Activated naive CD4-positive, alpha-beta T cell treated with anti-CD3 and anti-CD28 coated beads, Interleukin-2, amount 10 ng/mL, durations not matched to agents 7 days and 5 days (primary cell): ENCODE measurements at regions of chr16 and their contacts with region 1.

Region 1: GRCh38 chr16:81696961-81697615 is 82.0 kb upstream of the PLCG2 start:
- DNase-seq: peak; percentile 69
- H3K4me3 Mint-ChIP-seq: no peak overlapping the region
- H3K27ac Mint-ChIP-seq: no peak overlapping the region
- H3K4me1 Mint-ChIP-seq: no peaks in the 10 kb centered on the region
- H3K27me3 Mint-ChIP-seq: no peaks in the 10 kb centered on the region

Region 2: GRCh38 chr16:81366316-81366932 is 330.7 kb before region 1 on chr16:
- CTCF ChIA-PET with region 1: interaction called, 10 read pairs
- DNase-seq: no peak
- H3K4me3 Mint-ChIP-seq: no peak overlapping the region
- H3K27ac Mint-ChIP-seq: no peak overlapping the region
- H3K4me1 Mint-ChIP-seq: peaks cover 4% of the 10 kb centered on the region
- H3K27me3 Mint-ChIP-seq: no peaks in the 10 kb centered on the region

Region 3: GRCh38 chr16:81403616-81404373 is 293.3 kb before region 1 on chr16:
- CTCF ChIA-PET with region 1: interaction called, 30 read pairs
- DNase-seq: peak; percentile 86
- H3K4me3 Mint-ChIP-seq: no peak overlapping the region
- H3K27ac Mint-ChIP-seq: no peak overlapping the region
- H3K4me1 Mint-ChIP-seq: peaks cover 3% of the 10 kb centered on the region
- H3K27me3 Mint-ChIP-seq: peaks cover 27% of the 10 kb centered on the region

Region 4: GRCh38 chr16:81623363-81624102 is 73.6 kb before region 1 on chr16:
- CTCF ChIA-PET with region 1: interaction called, 110 read pairs
- DNase-seq: peak; percentile 72
- H3K4me3 Mint-ChIP-seq: no peak overlapping the region
- H3K27ac Mint-ChIP-seq: no peak overlapping the region
- H3K4me1 Mint-ChIP-seq: peaks cover 3% of the 10 kb centered on the region
- H3K27me3 Mint-ChIP-seq: no peaks in the 10 kb centered on the region

Region 5: GRCh38 chr16:81632392-81633146 is 64.5 kb before region 1 on chr16:
- CTCF ChIA-PET with region 1: interaction called, 16 read pairs
- DNase-seq: peak; percentile 84
- H3K4me3 Mint-ChIP-seq: peak overlapping the region; percentile 22
- H3K27ac Mint-ChIP-seq: peak overlapping the region; percentile 89
- H3K4me1 Mint-ChIP-seq: peaks cover 42% of the 10 kb centered on the region
- H3K27me3 Mint-ChIP-seq: no peaks in the 10 kb centered on the region

Region 6: GRCh38 chr16:81686391-81687130 is 10.5 kb before region 1 on chr16:
- CTCF ChIA-PET with region 1: interaction called, 15 read pairs
- DNase-seq: no peak
- H3K4me3 Mint-ChIP-seq: no peak overlapping the region
- H3K27ac Mint-ChIP-seq: no peak overlapping the region
- H3K4me1 Mint-ChIP-seq: peaks cover 8% of the 10 kb centered on the region
- H3K27me3 Mint-ChIP-seq: no peaks in the 10 kb centered on the region

Region 7: DNA sequence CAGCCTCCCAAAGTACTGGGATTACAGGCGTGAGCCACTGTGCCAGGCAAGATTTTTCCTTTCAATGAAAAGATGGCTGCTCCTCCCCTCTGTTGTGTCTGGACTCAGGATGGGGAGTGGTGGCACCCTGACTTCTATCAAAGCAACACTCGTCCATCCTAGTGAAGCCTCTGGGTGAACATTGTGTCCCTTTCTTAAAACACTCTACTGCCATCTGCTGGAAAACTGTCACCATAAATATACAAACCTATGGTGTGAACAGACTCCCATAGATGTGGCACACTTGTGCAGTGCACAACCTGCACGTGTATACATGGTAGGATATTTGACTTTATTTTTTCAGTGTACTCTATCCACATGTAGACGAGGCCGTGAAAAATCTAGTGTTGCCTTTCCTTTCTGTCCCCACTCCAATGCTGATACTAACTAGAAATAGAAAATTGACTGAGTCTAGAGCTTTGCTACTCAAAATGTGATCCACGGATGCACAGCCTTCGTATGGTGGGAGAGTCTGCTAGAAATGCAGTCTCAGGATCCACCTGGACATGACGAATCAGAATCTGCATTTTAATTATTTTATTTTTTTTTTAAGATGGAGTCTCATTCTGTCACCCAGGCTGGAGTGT is 26.1 kb after region 1 on chr16:
- CTCF ChIA-PET with region 1: interaction called, 11 read pairs
- DNase-seq: peak; percentile 43
- H3K4me3 Mint-ChIP-seq: no peak overlapping the region
- H3K27ac Mint-ChIP-seq: no peak overlapping the region
- H3K4me1 Mint-ChIP-seq: peaks cover 18% of the 10 kb centered on the region
- H3K27me3 Mint-ChIP-seq: peaks cover 24% of the 10 kb centered on the region

Region 8: DNA sequence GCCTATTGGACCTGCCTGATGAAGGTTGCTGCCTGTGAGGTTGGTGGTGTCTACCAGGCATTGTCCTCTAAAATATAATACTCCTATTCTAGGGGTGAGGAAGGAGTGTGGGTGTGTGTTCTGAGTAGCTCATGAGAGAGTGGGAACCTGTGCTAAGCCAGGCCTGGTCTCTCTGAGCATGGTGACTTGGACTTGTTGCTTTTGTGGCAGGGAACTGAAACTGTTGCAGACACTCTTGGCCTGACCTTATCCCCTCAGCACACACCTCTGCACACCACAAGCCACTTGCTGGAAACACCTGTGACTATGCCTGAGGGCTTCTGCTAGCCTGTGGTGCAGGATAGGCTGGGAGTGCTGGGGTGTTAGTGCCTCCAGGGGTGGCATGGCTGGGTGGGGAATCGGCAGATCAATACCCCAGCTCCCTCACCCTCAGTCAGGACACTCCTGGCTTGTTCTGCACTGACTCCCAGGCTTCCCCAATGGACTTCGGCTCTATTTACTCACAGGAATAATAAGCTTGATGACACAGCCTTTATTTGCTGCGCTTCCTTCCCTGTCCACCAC is 111.9 kb after region 1 on chr16:
- CTCF ChIA-PET with region 1: no interaction called
- DNase-seq: no peak
- H3K4me3 Mint-ChIP-seq: no peak overlapping the region
- H3K27ac Mint-ChIP-seq: no peak overlapping the region
- H3K4me1 Mint-ChIP-seq: peaks cover 23% of the 10 kb centered on the region
- H3K27me3 Mint-ChIP-seq: peaks cover 10% of the 10 kb centered on the region